Motor neuron (in vitro differentiated cells): ENCODE measurements at regions of chr15 and their contacts with region 1.

Region 1: DNA sequence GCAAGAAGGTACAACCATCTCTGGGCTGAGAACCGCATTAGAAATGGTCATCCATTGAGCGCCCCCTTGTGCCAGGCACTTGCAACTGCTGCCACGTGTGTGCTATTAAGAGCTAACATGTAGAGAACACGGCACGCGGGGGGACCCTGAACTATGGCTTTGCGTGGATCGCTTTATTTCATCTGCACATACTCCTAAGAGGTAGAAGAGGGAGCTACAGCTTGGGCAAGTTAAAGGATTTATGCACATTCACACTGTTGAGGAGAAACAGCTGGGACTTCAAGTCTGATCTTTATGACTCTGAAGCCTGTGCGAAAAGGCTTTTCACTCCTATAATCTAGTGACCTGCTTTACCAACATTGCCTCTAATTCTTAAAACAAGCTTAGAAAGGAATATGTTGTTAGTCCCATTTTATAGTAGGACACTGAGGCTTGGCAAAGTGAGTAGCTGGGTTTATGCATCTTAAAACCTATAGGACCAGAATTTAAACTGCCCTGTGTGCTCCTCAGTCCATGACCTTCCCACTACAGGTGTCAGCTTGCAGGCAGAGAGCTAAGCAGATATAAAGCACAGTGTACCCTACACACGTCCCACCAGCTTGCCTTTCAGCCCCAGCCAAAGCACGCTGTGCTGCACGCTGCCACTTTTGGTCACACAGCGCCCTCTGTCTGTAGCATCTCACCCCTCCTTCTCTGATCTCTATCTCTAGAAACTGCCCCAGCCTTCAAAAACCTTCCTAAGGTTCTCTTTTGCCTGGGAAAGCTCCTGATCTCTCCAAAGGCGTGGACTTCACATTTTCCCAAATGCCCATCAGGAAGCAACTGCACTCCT is 57.8 kb downstream of the STARD5 start:
- ATAC-seq: peak; percentile 90 to 98 (median 96)
- H3K4me3 ChIP-seq: no peak overlapping the region
- H3K27ac ChIP-seq: no peak overlapping the region
- H3K4me1 ChIP-seq: peaks cover 0 to 3% of the 10 kb centered on the region in 2 donors

Region 2: DNA sequence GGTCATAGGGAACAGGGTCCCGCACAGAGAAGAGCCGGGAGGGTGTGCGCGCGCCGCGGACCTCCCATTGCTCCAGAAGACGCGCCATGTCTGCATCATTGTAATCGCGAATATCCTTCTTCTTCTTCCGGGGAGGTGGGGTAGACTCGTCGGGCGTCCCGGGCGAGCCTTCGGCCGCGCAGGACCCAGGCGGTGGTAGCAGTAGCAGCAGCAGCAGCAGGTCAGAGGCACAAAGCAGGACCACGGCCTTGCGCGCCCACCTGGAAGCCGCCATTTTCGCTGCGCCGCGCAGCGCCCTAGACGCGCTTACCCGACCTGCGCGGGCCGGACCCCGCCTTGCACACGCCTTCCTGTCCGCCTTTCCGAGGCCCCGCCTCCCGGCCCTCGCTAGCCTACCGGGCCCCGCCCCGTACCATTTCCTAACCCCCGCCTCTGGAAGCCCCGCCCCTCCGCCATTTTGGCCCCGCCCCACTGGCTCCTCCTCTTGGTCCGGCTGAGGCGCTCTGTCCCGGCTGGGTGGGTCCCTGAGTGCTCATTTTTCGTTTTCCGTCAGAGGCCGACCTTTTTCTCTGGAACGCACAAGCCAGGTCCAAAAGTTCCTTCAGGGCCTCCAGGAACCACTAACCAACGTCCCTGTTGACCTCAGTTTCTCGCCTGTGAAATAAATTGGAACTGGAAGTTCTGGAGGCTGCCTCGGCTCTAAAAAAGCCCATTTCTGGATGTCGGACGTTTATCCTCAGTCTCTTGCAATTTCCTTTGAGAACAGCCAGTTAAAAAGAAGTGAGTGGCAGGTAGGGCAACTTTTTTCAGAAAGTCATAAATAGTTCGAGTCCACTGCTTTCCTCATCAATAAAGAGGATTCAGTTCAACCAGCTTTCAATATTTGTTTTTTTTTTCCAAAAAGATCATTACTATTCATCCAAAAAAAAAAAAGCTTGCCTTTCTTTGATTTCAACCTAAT is 276.4 kb before region 1 on chr15 and contains the start of gene MESD:
- in situ Hi-C with region 1: loop called in 4 of 9 experiments (anchors 10 to 25 kb)
- ATAC-seq: peak; percentile 65 to 99 (median 98)
- H3K4me3 ChIP-seq: peak within 1 kb of the TSS; percentile 81 to 99 (median 85)
- H3K27ac ChIP-seq: peak within 1 kb of the TSS; percentile 81 to 90
- H3K4me1 ChIP-seq: peaks cover 10 to 18% of the 10 kb centered on the region in 2 donors
- total RNA-seq, gene MESD: 9.7 to 83.2 (median 23.1) TPM

Region 3: GRCh38 chr15:81087066-81087465 is 179.1 kb before region 1 on chr15:
- in situ Hi-C with region 1: no loop called
- ATAC-seq: no peak
- H3K4me3 ChIP-seq: no peak overlapping the region
- H3K27ac ChIP-seq: no peak overlapping the region
- H3K4me1 ChIP-seq: no peaks in the 10 kb centered on the region

Region 4: GRCh38 chr15:81106560-81106959 is 159.6 kb before region 1 on chr15:
- in situ Hi-C with region 1: loop called in 3 of 9 experiments (anchors 5 to 10 kb)
- ATAC-seq: peak; percentile 12 to 78 (median 36)
- H3K4me3 ChIP-seq: no peak overlapping the region
- H3K27ac ChIP-seq: no peak overlapping the region
- H3K4me1 ChIP-seq: no peaks in the 10 kb centered on the region

Region 5: DNA sequence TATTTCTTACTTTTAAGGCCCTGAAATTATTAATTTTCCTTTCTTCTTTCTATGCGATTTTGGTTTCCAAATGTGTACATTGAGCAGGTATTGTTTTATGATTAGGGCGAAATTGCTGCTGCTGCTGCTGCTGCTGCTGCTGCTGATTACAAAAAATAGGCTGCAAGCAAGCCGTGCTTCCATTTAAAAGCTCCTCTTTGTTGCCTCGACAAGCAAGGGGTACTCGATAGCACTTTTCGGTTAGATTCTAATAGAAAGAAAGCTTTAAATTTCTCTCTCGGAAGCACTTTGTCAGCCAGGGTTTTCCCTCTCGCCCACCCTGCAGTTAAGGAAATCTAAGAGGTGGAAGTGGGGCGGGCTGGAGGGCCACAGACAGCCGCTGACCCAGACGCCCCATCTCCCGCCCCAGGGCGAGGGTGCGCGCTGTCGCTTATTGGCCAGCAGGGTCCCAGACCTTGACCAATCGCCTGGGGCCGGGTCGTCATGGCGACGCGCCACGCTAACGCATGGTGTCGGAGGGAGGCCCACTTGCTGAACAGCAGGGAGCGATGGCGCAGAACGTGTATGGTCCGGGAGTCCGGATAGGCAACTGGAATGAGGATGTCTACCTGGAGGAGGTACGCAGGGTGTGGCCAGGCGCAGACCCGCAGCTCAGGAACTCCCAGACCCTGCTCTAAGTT is 132.2 kb before region 1 on chr15 and contains the start of gene CFAP161:
- in situ Hi-C with region 1: loop called in 1 of 9 experiments (anchors 25 kb)
- ATAC-seq: peak; percentile 100
- H3K4me3 ChIP-seq: peak within 1 kb of the TSS; percentile 32 to 52 (median 38)
- H3K27ac ChIP-seq: no peak within 1 kb of the TSS
- H3K4me1 ChIP-seq: peaks cover 0 to 2% of the 10 kb centered on the region in 2 donors
- total RNA-seq, gene CFAP161: 0.14 to 3.1 (median 0.62) TPM in 4 of 8 experiments, not detected in the others

Region 6: GRCh38 chr15:81155375-81156218 is 110.6 kb before region 1 on chr15:
- in situ Hi-C with region 1: loop called in 3 of 9 experiments (anchors 10 to 25 kb)
- ATAC-seq: peak in 2 of 8 experiments; percentile 29 to 44
- H3K4me3 ChIP-seq: no peak overlapping the region
- H3K27ac ChIP-seq: no peak overlapping the region
- H3K4me1 ChIP-seq: no peaks in the 10 kb centered on the region

Region 7: GRCh38 chr15:81315452-81316175 is 49.5 kb after region 1 on chr15:
- in situ Hi-C with region 1: no loop called
- ATAC-seq: no peak
- H3K4me3 ChIP-seq: no peak overlapping the region
- H3K27ac ChIP-seq: no peak overlapping the region
- H3K4me1 ChIP-seq: no peaks in the 10 kb centered on the region

Region 8: DNA sequence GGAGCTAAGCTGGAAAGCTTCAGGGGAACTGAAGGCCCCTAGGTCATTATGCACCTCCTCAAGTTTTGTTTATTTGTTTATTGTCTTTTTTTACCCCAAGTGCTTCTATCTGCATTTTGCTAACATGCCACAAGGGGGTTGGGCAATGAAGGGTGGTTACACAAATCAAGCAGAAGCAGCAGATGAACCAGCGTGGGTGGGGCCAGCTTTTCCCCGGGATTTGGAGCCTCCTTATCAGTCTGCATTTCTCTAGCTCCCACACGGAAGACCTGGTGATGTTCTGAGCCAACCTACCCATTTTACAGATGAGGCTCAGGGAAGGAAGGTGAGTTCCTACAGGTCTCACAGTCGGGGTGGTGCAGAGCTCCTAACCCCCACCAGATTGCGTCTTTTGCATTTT is 91.1 kb after region 1 on chr15:
- in situ Hi-C with region 1: no loop called
- ATAC-seq: peak in 3 of 8 experiments; percentile 19 to 70 (median 42)
- H3K4me3 ChIP-seq: no peak overlapping the region
- H3K27ac ChIP-seq: no peak overlapping the region
- H3K4me1 ChIP-seq: no peaks in the 10 kb centered on the region